Heart left ventricle (tissue), 16 donors: ENCODE measurements at regions of chr2 and their contacts with region 1.

Region 1: DNA sequence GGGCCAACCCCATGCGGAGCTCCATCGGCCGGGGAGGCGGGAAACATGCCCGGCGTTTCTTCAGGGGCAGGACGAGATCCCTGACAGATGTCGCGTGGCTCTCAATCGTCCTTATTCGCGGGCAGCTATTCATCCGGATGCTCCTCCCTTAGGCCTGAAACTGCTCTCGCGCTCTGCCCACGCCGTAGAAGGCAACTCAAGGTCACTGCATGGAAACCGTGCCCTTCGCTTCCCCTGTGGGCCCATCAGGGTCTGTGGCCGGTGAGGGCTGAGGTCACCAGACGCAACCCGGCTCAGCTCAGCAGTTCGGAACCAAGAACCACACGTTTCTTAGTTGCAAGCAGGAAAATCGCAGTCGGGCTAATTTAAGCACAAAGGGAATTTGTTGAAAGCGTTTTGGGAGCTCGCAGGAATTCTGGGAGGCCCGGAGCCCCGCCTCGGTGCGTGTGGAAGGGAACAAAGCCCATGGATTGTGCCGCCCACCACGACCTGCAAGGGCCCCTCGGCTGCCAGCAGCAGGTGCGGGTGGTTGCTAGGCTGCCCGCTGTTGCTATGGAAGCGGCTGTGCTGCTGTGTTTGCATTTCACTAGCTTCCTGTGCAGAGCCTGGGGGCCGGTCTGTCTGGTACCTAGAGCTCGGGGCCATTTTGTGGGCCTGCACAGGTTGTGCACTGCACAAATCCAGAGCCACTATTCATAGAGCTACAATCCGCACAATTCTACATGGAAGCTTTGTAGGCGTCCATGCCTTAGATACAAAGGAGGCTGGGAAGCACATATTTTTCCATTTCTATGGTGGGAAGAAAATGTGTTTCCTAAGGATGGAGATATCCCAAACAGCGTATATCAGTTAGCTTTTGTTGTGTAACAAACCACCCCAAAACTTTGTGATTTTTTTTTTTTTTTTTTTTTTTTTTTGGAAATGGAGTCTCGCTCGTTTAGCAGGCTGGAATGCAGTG is 6.0 kb upstream of the ALLC start:
- DNase-seq: peak; percentile 37 to 72 (median 41)
- ATAC-seq: peak in 3 of 4 donors; percentile 2 to 64 (median 53)
- H3K4me3 ChIP-seq: peak overlapping the region in 10 of 12 donors; percentile 26 to 54 (median 40)
- H3K27ac ChIP-seq: peak overlapping the region; percentile 36 to 77 (median 69)
- H3K4me1 ChIP-seq: peaks cover 0 to 19% (median 10%) of the 10 kb centered on the region in 12 donors
- H3K27me3 ChIP-seq: no peaks in the 10 kb centered on the region
- CTCF ChIP-seq: no peak
- POLR2A ChIP-seq: no peak

Region 2: GRCh38 chr2:3423492-3424175 is 228.3 kb before region 1 on chr2:
- intact Hi-C with region 1: loop called (anchors 2 to 10 kb)
- DNase-seq: peak; percentile 47 to 83 (median 68)
- ATAC-seq: peak in 3 of 4 donors; percentile 51 to 65 (median 57)
- H3K4me3 ChIP-seq: no peak overlapping the region
- H3K27ac ChIP-seq: no peak overlapping the region
- H3K4me1 ChIP-seq: peaks cover 0 to 11% (median 0%) of the 10 kb centered on the region in 12 donors
- H3K27me3 ChIP-seq: no peaks in the 10 kb centered on the region
- CTCF ChIP-seq: peak; percentile 91 to 99 (median 98)
- POLR2A ChIP-seq: no peak

Region 3: GRCh38 chr2:3461801-3462492 is 190.0 kb before region 1 on chr2:
- intact Hi-C with region 1: loop called in 2 of 10 experiments (anchors 5 kb)
- DNase-seq: peak in 2 of 5 donors; percentile 24 to 55
- ATAC-seq: no peak
- H3K4me3 ChIP-seq: peak overlapping the region in 1 of 12 donors; percentile 14
- H3K27ac ChIP-seq: peak overlapping the region in 7 of 12 donors; percentile 10 to 87 (median 80)
- H3K4me1 ChIP-seq: peaks cover 0 to 62% (median 42%) of the 10 kb centered on the region in 12 donors
- H3K27me3 ChIP-seq: no peaks in the 10 kb centered on the region
- CTCF ChIP-seq: peak; percentile 86 to 97 (median 96)
- POLR2A ChIP-seq: no peak

Region 4: GRCh38 chr2:3536682-3537632 is 115.0 kb before region 1 on chr2:
- intact Hi-C with region 1: loop called in 2 of 10 experiments (anchors 5 kb)
- DNase-seq: peak in 3 of 5 donors; percentile 55 to 73 (median 61)
- ATAC-seq: peak; percentile 32 to 56 (median 52)
- H3K4me3 ChIP-seq: peak overlapping the region; percentile 15 to 65 (median 47)
- H3K27ac ChIP-seq: peak overlapping the region; percentile 85 to 97 (median 92)
- H3K4me1 ChIP-seq: peaks cover 2 to 33% (median 18%) of the 10 kb centered on the region in 12 donors
- H3K27me3 ChIP-seq: no peaks in the 10 kb centered on the region
- CTCF ChIP-seq: peak in 11 of 12 donors; percentile 9 to 66 (median 34)
- POLR2A ChIP-seq: no peak

Region 5: DNA sequence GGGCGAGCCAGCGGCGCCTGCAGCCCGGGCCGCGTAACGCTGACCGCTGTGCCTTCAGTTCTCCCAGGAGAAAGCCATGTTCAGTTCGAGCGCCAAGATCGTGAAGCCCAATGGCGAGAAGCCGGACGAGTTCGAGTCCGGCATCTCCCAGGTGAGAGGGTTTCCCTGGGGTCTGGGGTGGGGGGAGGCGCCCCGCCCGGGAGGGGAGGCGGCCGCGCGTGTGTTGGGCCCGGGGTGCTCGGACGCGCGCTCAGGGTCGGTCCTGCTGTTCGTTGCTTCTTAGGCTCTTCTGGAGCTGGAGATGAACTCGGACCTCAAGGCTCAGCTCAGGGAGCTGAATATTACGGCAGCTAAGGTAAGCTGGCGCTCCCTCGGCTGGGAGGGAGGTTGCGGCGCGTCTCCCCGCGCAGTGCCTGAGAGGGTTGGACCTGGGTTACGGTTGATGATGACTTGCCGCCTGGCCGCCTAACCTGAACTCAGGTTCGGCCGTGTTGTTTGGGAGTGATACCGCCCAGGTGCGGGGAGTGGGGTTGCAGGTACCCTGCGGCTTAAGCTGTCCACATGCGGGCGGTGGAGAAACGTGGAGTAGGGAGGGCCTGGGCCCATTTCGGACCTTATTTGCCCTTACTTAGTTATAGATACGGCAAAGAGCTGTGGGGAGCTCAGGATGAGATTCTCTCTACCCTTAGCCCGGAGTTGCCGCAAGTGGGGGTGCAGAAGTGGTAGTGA is 76.3 kb before region 1 on chr2:
- intact Hi-C with region 1: loop called in 3 of 10 experiments (anchors 1 to 10 kb)
- DNase-seq: no peak
- ATAC-seq: peak in 3 of 4 donors; percentile 1 to 42 (median 41)
- H3K4me3 ChIP-seq: peak overlapping the region; percentile 61 to 96 (median 84)
- H3K27ac ChIP-seq: peak overlapping the region; percentile 53 to 96 (median 84)
- H3K4me1 ChIP-seq: peaks cover 0 to 46% (median 32%) of the 10 kb centered on the region in 12 donors
- H3K27me3 ChIP-seq: no peaks in the 10 kb centered on the region
- CTCF ChIP-seq: no peak
- POLR2A ChIP-seq: no peak

Region 6: DNA sequence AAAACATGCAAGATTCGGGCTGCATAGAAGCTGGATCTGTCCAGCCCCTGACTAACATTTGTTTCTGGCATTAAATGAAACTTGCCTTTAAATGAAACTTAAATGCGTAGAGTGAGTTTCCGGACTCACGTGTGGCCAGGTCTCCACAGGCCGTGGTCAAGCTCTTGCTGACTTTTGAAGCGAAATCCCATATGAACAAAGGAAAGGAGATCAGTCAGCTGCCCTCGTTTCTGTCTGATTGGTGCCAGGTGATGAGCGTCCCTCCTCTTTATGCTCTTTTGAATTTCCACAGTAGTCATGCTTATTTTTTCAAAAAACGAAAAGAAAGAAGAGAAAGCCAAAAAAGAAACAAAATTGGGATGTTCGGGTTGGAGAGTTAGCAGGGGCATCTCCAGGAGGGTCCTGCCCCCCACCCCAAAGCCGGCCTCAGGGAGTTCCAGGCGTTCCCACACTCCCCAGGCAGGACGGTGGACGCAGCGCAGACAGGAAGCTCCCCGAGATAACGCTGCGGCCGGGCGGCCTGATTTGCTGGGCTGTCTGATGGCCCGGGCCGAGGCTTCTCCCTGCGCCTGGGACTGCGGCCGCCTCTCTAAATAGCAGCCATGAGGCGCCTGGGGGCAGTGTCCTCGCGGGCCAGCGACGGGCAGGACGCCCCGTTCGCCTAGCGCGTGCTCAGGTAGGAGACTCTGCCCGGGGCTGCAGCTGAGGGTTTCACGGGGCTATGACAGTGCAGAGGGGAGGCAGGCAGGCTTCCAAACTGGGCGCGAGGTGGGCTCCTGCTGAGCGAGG is 57.3 kb before region 1 on chr2 and contains the start of gene COLEC11:
- intact Hi-C with region 1: loop called in 5 of 10 experiments (anchors 2 to 5 kb)
- DNase-seq: peak; percentile 71 to 82 (median 73)
- ATAC-seq: peak; percentile 76 to 97 (median 94)
- H3K4me3 ChIP-seq: peak within 1 kb of the TSS in 11 of 12 donors; percentile 3 to 48 (median 35)
- H3K27ac ChIP-seq: peak within 1 kb of the TSS in 9 of 12 donors; percentile 2 to 58 (median 44)
- H3K4me1 ChIP-seq: peaks cover 0 to 14% (median 8%) of the 10 kb centered on the region in 12 donors
- H3K27me3 ChIP-seq: peaks cover 0 to 5% (median 0%) of the 10 kb centered on the region in 9 donors
- CTCF ChIP-seq: peak in 11 of 12 donors; percentile 13 to 65 (median 40)
- POLR2A ChIP-seq: no peak
- total RNA-seq, gene COLEC11: 2.3 to 9.9 (median 2.9) TPM

Region 7: DNA sequence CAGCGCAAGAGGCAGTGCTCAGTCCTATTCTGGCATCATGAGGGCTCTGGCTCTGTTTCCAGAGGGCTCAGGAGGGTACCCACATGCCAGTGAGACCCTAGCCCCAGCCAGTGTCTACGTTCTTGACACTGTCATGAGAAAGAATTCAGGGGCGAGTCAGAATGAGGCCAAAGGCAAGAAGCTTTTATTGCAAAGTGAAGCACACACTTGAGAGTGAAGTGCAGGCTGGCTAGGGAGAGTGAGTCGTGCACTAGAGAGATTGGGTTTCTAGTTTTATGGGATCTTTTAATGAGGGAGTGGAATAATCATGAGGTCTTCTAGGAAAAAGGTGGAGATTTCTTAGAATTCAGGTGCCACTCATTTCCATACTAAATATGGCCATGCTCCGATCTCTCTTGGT is 215.5 kb after region 1 on chr2:
- intact Hi-C with region 1: no loop called
- DNase-seq: no peak
- ATAC-seq: no peak
- H3K4me3 ChIP-seq: no peak overlapping the region
- H3K27ac ChIP-seq: no peak overlapping the region
- H3K4me1 ChIP-seq: peaks cover 0 to 5% (median 0%) of the 10 kb centered on the region in 12 donors
- H3K27me3 ChIP-seq: no peaks in the 10 kb centered on the region
- CTCF ChIP-seq: no peak
- POLR2A ChIP-seq: no peak